Caco-2 (cell line): ENCODE measurements at regions of chr1 and their contacts with region 1.

Region 1: DNA sequence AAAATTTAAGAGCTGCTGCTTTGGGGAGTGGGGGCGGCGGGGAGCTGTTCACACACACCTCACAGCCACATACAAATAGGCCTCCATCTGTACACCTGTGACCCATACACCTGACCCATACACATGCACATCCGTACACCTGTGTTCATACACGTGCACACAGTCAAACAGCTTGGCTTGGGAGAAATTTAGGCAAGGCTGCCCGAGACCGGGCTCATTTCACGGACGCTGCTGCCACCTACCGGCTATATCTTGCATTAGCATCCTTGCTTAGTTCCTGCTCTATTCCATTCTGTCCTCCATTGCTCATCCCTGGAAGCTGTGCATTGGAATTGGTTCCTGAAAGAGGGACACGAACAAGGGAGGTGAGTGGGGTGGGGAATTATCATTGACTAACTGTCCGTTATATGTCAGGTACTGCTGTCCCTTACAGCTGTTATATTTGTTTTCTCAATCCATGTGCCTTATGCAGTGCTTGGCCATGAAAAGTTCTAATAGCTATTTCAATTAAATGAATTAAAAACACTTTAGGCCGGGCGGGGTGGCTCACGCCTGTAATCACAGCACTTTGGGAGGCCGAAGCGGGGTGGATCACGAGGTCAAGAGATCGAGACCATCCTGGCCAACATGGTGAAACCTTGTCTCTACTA is 37.1 kb upstream of the EPB41 start:
- DNase-seq: peak; percentile 63 to 80
- H3K4me3 ChIP-seq: no peak overlapping the region
- H3K4me3 Mint-ChIP-seq: no peak overlapping the region
- H3K27ac Mint-ChIP-seq: no peak overlapping the region
- H3K4me1 ChIP-seq: peaks cover 6% of the 10 kb centered on the region
- H3K4me1 Mint-ChIP-seq: peaks cover 11% of the 10 kb centered on the region
- H3K27me3 ChIP-seq: no peaks in the 10 kb centered on the region
- H3K27me3 Mint-ChIP-seq: no peaks in the 10 kb centered on the region
- CTCF ChIP-seq: peak; percentile 52 to 73

Region 2: GRCh38 chr1:28830814-28831213 is 46.4 kb before region 1 on chr1:
- CTCF ChIA-PET with region 1: no interaction called
- POLR2A ChIA-PET with region 1: interaction called, 13 read pairs
- intact Hi-C with region 1: no loop called
- DNase-seq: no peak
- H3K4me3 ChIP-seq: no peak overlapping the region
- H3K4me3 Mint-ChIP-seq: no peak overlapping the region
- H3K27ac Mint-ChIP-seq: no peak overlapping the region
- H3K4me1 ChIP-seq: no peaks in the 10 kb centered on the region
- H3K4me1 Mint-ChIP-seq: no peaks in the 10 kb centered on the region
- H3K27me3 ChIP-seq: no peaks in the 10 kb centered on the region
- H3K27me3 Mint-ChIP-seq: no peaks in the 10 kb centered on the region
- CTCF ChIP-seq: no peak

Region 3: GRCh38 chr1:28902738-28903137 is 25.5 kb after region 1 on chr1:
- CTCF ChIA-PET with region 1: no interaction called
- POLR2A ChIA-PET with region 1: no interaction called
- intact Hi-C with region 1: no loop called
- DNase-seq: no peak
- H3K4me3 ChIP-seq: no peak overlapping the region
- H3K4me3 Mint-ChIP-seq: no peak overlapping the region
- H3K27ac Mint-ChIP-seq: no peak overlapping the region
- H3K4me1 ChIP-seq: no peaks in the 10 kb centered on the region
- H3K4me1 Mint-ChIP-seq: no peaks in the 10 kb centered on the region
- H3K27me3 ChIP-seq: no peaks in the 10 kb centered on the region
- H3K27me3 Mint-ChIP-seq: no peaks in the 10 kb centered on the region
- CTCF ChIP-seq: no peak